Naive thymus-derived CD8-positive, alpha-beta T cell (primary cell): ENCODE measurements at regions of chr4 and their contacts with region 1.

Region 1: GRCh38 chr4:80173401-80173800 is 23.9 kb upstream of the PRDM8 start:
- DNase-seq: peak in 8 of 10 donors; percentile 44 to 75 (median 56)
- ATAC-seq: peak; percentile 98 to 100
- H3K4me3 Mint-ChIP-seq: peak overlapping the region; percentile 21 to 81 (median 74)
- H3K27ac Mint-ChIP-seq: peak overlapping the region; percentile 90 to 99 (median 94)
- H3K4me1 Mint-ChIP-seq: peaks cover 20 to 56% (median 48%) of the 10 kb centered on the region in 4 donors
- H3K27me3 Mint-ChIP-seq: no peaks in the 10 kb centered on the region

Region 2: DNA sequence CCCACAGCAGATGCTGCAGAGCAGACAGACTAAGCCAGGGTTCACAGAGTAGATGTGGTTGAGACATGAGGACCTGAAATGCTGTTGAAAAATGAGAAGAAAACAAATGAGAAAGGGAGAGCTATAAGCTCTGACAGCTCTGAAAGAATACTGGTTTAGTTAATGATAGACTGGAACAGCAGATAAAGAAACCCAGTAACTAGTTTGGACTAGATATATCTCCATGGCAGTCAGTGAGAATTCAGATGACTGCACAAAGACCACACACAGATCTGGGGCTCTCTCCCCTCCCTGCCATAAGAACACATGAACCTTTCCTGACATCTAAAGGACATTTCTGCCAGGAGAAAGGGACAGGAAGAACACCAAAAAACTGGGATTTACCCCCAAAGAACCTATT is 855.7 kb before region 1 on chr4:
- POLR2A ChIA-PET with region 1: no interaction called
- DNase-seq: no peak
- ATAC-seq: no peak
- H3K4me3 Mint-ChIP-seq: no peak overlapping the region
- H3K27ac Mint-ChIP-seq: no peak overlapping the region
- H3K4me1 Mint-ChIP-seq: no peaks in the 10 kb centered on the region
- H3K27me3 Mint-ChIP-seq: peaks cover 0 to 3% (median 0%) of the 10 kb centered on the region in 5 donors

Region 3: GRCh38 chr4:80125252-80126177 is 47.9 kb before region 1 on chr4:
- POLR2A ChIA-PET with region 1: interaction called, 11 read pairs
- DNase-seq: peak in 9 of 10 donors; percentile 3 to 73 (median 48)
- ATAC-seq: peak; percentile 90 to 93
- H3K4me3 Mint-ChIP-seq: peak overlapping the region; percentile 9 to 59 (median 49)
- H3K27ac Mint-ChIP-seq: peak overlapping the region; percentile 74 to 96 (median 91)
- H3K4me1 Mint-ChIP-seq: peaks cover 19 to 54% (median 45%) of the 10 kb centered on the region in 4 donors
- H3K27me3 Mint-ChIP-seq: no peaks in the 10 kb centered on the region

Region 4: GRCh38 chr4:80138551-80139538 is 34.6 kb before region 1 on chr4:
- POLR2A ChIA-PET with region 1: interaction called, 14 read pairs
- DNase-seq: peak in 9 of 10 donors; percentile 12 to 75 (median 51)
- ATAC-seq: peak; percentile 99 to 100
- H3K4me3 Mint-ChIP-seq: peak overlapping the region in 2 of 10 donors; percentile 50 to 61
- H3K27ac Mint-ChIP-seq: peak overlapping the region; percentile 0 to 93 (median 76)
- H3K4me1 Mint-ChIP-seq: peaks cover 19 to 53% (median 42%) of the 10 kb centered on the region in 4 donors
- H3K27me3 Mint-ChIP-seq: peaks cover 0 to 2% (median 0%) of the 10 kb centered on the region in 5 donors